ENCODE measurements at regions of chr7 and their contacts with region 1.

Region 1: DNA sequence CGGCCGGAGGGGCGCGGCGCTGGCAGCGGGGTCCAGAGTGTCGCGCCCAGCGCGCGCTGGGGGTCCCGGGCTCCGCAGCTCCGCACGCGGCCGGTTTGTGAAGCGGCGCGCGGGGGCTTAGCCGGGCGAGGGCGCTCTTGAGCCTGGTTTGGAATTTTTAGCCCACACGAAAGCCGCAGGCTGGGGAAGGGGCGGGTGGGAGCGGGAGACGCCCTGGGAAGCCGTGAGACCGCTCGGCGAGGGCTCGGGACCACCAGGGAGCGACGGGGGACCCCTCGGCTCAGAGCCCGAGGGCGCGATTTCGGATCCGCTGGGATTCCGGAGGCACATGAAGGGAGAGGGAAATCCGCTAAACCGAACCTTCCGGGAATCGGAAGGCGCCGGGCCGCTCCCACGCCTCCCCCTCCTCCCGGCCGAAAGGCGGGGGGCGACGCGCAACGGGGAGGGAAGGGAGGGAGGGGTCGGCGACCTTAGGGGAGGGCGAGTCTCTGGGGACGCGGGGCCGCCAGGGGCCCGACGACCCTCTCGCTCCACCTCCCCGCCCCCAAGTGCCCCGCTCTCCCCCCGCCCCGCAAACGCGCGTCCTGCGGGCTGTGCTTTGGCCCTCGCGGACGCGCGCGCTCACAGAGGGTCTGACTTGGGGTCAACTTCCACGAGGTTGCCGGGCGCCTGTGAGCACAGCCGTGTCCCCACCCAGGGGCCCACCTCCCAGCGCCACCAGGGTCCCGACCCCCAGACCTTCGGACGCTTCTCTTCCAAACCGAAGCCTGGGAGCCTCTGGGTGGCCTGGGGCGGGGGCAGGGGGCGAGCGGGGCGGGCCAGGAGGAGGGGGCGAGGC is 5.1 kb upstream of the ELFN1 start:
- DNase-seq: peak in 7 of 9 experiments; percentile 26 to 67 (median 59)
- ATAC-seq: peak; percentile 42
- H3K4me3 ChIP-seq: peak overlapping the region in 1 of 2 experiments; percentile 41
- H3K4me3 Mint-ChIP-seq: peak overlapping the region; percentile 47
- H3K27ac ChIP-seq: no peak overlapping the region
- H3K27ac Mint-ChIP-seq: no peak overlapping the region
- H3K4me1 ChIP-seq: peaks cover 23% of the 10 kb centered on the region
- H3K4me1 Mint-ChIP-seq: peaks cover 13% of the 10 kb centered on the region
- H3K27me3 ChIP-seq: peaks cover 3 to 40% of the 10 kb centered on the region in 2 experiments
- H3K27me3 Mint-ChIP-seq: peaks cover 29% of the 10 kb centered on the region
- CTCF ChIP-seq: peak; percentile 58

Region 2: DNA sequence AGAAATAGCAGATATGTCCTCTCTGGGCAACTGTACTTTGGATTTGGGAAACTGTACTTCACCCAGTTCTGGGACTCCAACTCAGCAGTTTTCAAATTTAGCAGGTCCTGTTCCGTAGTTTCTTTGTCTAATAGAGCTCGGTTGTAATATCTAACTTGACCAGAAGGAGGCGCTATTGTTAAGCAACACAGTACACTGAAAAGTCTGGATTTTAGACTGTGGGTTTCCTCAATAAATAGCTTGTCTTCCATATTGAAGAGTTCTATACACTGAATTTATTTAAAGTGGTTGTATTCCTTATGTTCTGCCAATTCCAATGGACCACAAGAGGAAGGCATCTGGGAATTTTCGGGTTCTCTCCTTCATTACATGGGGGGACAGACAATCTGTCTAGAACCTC is 45.0 kb after region 1 on chr7:
- CTCF ChIA-PET with region 1: no interaction called
- POLR2A ChIA-PET with region 1: no interaction called
- intact Hi-C with region 1: no loop called
- DNase-seq: no peak
- ATAC-seq: no peak
- H3K4me3 ChIP-seq: no peak overlapping the region
- H3K4me3 Mint-ChIP-seq: no peak overlapping the region
- H3K27ac ChIP-seq: no peak overlapping the region
- H3K27ac Mint-ChIP-seq: no peak overlapping the region
- H3K4me1 ChIP-seq: no peaks in the 10 kb centered on the region
- H3K4me1 Mint-ChIP-seq: no peaks in the 10 kb centered on the region
- H3K27me3 ChIP-seq: no peaks in the 10 kb centered on the region
- H3K27me3 Mint-ChIP-seq: no peaks in the 10 kb centered on the region
- CTCF ChIP-seq: peak; percentile 36

Region 3: DNA sequence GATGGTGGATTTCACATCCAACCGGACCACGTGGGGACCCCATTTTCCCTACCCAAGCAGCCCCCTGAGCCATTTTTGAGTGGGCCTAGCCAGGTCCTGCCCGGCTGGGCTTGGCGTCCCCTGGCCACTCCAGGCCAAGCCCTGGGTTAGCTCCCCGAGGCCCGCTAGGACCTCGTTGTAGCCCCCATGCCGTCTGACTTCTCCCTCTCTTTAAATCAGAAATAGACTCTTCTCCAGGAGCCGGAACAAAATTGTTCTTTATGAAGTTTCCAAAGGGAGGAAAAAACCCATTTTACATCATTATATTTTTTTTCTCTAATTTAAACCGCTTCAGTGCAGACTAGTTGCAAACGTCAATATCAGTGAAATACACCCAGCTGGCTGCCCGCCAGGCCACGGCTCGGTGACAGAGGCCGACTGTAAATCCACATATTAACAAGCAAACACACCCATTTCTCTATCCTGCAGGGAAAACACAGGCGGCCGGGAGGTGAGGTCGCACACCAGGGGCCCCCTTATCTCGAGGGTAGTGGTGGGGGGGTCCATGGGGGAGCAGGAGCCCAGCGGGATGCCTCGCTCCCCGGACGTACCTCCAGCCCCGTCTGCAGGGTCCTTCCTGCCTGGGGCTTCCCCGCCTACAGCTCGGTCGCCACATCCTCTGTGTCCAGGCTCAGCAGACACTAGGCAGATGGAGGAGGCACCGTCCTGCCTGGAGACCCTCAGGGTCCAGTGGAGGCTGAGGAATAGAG is 77.8 kb after region 1 on chr7:
- CTCF ChIA-PET with region 1: no interaction called
- POLR2A ChIA-PET with region 1: no interaction called
- intact Hi-C with region 1: loop called in 1 of 2 experiments (anchors 5 kb)
- DNase-seq: peak in 8 of 9 experiments; percentile 9 to 68 (median 55)
- ATAC-seq: peak; percentile 69
- H3K4me3 ChIP-seq: peak overlapping the region in 1 of 2 experiments; percentile 34
- H3K4me3 Mint-ChIP-seq: peak overlapping the region; percentile 76
- H3K27ac ChIP-seq: peak overlapping the region in 1 of 2 experiments; percentile 46
- H3K27ac Mint-ChIP-seq: peak overlapping the region; percentile 66
- H3K4me1 ChIP-seq: peaks cover 40% of the 10 kb centered on the region
- H3K4me1 Mint-ChIP-seq: peaks cover 25% of the 10 kb centered on the region
- H3K27me3 ChIP-seq: no peaks in the 10 kb centered on the region
- H3K27me3 Mint-ChIP-seq: no peaks in the 10 kb centered on the region
- CTCF ChIP-seq: no peak

Region 4: DNA sequence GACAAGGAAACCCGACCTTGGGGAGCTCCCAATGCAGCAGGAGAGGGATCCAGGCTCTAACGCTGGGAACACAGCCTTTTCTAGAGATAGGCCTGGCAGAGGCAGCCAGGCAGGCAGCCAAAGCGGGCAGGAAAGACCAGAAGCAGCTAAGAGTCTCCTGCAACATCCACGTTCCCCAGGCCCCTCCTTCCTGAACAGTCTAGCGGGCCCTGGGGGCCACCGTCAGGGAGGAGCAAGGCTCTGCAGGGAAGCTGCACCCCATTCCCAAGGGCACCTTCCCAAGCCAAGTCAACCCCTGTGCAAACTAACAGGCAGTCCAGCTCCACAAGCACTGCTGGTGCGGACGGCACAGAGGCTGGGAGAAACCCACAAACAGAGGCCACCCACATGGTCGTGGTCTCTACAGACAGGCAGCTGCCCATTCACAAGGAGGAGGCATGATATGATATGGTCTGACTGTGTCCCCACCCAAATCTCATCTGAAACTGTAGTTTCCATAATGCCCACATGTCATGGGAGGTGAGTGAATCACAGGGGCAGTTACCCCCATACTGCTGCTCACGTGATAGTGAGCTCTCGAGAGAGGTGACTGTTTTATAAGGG is 452.2 kb after region 1 on chr7:
- CTCF ChIA-PET with region 1: no interaction called
- POLR2A ChIA-PET with region 1: no interaction called
- intact Hi-C with region 1: no loop called
- DNase-seq: no peak
- ATAC-seq: no peak
- H3K4me3 ChIP-seq: no peak overlapping the region
- H3K4me3 Mint-ChIP-seq: no peak overlapping the region
- H3K27ac ChIP-seq: no peak overlapping the region
- H3K27ac Mint-ChIP-seq: peak overlapping the region; percentile 19
- H3K4me1 ChIP-seq: peaks cover 43% of the 10 kb centered on the region
- H3K4me1 Mint-ChIP-seq: peaks cover 66% of the 10 kb centered on the region
- H3K27me3 ChIP-seq: no peaks in the 10 kb centered on the region
- H3K27me3 Mint-ChIP-seq: no peaks in the 10 kb centered on the region
- CTCF ChIP-seq: no peak

Region 5: GRCh38 chr7:2209146-2209960 is 544.4 kb after region 1 on chr7:
- CTCF ChIA-PET with region 1: no interaction called
- POLR2A ChIA-PET with region 1: no interaction called
- intact Hi-C with region 1: loop called in 1 of 2 experiments (anchors 2 kb)
- DNase-seq: peak; percentile 14 to 67 (median 46)
- ATAC-seq: peak; percentile 52
- H3K4me3 ChIP-seq: no peak overlapping the region
- H3K4me3 Mint-ChIP-seq: no peak overlapping the region
- H3K27ac ChIP-seq: no peak overlapping the region
- H3K27ac Mint-ChIP-seq: no peak overlapping the region
- H3K4me1 ChIP-seq: no peaks in the 10 kb centered on the region
- H3K4me1 Mint-ChIP-seq: no peaks in the 10 kb centered on the region
- H3K27me3 ChIP-seq: no peaks in the 10 kb centered on the region
- H3K27me3 Mint-ChIP-seq: no peaks in the 10 kb centered on the region
- CTCF ChIP-seq: no peak

Region 6: GRCh38 chr7:2903682-2904162 is 1238.8 kb after region 1 on chr7:
- CTCF ChIA-PET with region 1: no interaction called
- POLR2A ChIA-PET with region 1: no interaction called
- intact Hi-C with region 1: no loop called
- DNase-seq: peak in 2 of 9 experiments; percentile 31 to 43
- ATAC-seq: peak; percentile 15
- H3K4me3 ChIP-seq: no peak overlapping the region
- H3K4me3 Mint-ChIP-seq: no peak overlapping the region
- H3K27ac ChIP-seq: peak overlapping the region in 1 of 2 experiments; percentile 57
- H3K27ac Mint-ChIP-seq: peak overlapping the region; percentile 30
- H3K4me1 ChIP-seq: peaks cover 18% of the 10 kb centered on the region
- H3K4me1 Mint-ChIP-seq: peaks cover 14% of the 10 kb centered on the region
- H3K27me3 ChIP-seq: no peaks in the 10 kb centered on the region
- H3K27me3 Mint-ChIP-seq: no peaks in the 10 kb centered on the region
- CTCF ChIP-seq: no peak

Measured in CD8-positive, alpha-beta T cell (primary cell).